Activated T-helper 2 cell treated with anti-CD3 and anti-CD28 coated beads, Interferon-gamma antibody, Interleukin-2, Interleukin-4, amounts not matched to agents 10 μg/mL and 5 μg/mL and 100 μg/mL, durations not matched to agents 14 hours and 24 hours and 36 hours (primary cell): ENCODE measurements at regions of chr17 and their contacts with region 1.

Region 1: GRCh38 chr17:49361902-49362722 is at the start of gene ZNF652:
- DNase-seq: peak; percentile 93
- H3K4me3 Mint-ChIP-seq: peak within 1 kb of the TSS; percentile 83
- H3K27ac Mint-ChIP-seq: peak within 1 kb of the TSS; percentile 85
- H3K4me1 Mint-ChIP-seq: peaks cover 47% of the 10 kb centered on the region
- H3K27me3 Mint-ChIP-seq: peaks cover 9% of the 10 kb centered on the region
- total RNA-seq, gene ZNF652: 4.3 and 5.4 TPM in 2 replicates

Region 2: DNA sequence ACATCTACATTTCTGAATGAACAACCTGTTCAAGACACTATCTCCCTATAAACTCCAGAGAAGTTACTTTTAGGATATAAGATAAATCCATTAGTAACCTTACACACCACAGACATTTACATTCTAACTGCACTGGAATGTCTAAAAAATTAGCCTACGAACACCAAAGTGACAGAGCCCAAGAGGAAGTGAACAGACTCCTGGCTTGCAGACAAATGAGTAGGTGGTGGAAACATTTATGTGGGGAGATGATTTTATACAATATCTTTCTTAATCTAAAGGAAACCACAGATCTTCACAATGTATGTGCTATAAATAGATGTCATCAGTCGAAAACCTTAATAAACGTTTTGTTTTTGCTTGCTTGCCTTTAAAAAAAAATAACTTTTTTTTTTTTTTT is 18.8 kb before region 1 on chr17:
- intact Hi-C with region 1: loop called (anchors 1 kb)
- DNase-seq: no peak
- H3K4me3 Mint-ChIP-seq: peak overlapping the region; percentile 59
- H3K27ac Mint-ChIP-seq: peak overlapping the region; percentile 74
- H3K4me1 Mint-ChIP-seq: peaks cover 43% of the 10 kb centered on the region
- H3K27me3 Mint-ChIP-seq: peaks cover 30% of the 10 kb centered on the region

Region 3: DNA sequence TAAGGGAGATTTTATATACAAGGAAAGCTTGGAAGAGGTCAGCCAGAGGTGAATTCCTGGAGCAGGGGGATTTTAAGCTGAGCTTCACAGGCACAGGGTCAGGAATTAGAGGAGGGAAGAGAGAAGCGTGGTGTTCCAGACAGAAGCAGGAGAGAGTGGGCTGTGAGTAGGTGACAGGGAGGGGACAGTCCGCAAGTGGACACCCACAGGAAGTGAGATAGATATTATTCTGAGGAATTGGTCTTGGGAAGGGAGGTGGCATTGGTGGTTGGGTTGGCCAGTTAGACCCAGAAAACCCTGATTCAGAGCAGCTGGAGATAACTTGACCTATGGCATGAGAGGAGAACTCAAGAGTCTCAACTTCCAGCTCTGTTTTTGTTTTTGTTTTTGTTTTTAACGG is 37.9 kb after region 1 on chr17:
- intact Hi-C with region 1: loop called (anchors 5 kb)
- DNase-seq: no peak
- H3K4me3 Mint-ChIP-seq: no peak overlapping the region
- H3K27ac Mint-ChIP-seq: no peak overlapping the region
- H3K4me1 Mint-ChIP-seq: peaks cover 8% of the 10 kb centered on the region
- H3K27me3 Mint-ChIP-seq: peaks cover 10% of the 10 kb centered on the region

Region 4: DNA sequence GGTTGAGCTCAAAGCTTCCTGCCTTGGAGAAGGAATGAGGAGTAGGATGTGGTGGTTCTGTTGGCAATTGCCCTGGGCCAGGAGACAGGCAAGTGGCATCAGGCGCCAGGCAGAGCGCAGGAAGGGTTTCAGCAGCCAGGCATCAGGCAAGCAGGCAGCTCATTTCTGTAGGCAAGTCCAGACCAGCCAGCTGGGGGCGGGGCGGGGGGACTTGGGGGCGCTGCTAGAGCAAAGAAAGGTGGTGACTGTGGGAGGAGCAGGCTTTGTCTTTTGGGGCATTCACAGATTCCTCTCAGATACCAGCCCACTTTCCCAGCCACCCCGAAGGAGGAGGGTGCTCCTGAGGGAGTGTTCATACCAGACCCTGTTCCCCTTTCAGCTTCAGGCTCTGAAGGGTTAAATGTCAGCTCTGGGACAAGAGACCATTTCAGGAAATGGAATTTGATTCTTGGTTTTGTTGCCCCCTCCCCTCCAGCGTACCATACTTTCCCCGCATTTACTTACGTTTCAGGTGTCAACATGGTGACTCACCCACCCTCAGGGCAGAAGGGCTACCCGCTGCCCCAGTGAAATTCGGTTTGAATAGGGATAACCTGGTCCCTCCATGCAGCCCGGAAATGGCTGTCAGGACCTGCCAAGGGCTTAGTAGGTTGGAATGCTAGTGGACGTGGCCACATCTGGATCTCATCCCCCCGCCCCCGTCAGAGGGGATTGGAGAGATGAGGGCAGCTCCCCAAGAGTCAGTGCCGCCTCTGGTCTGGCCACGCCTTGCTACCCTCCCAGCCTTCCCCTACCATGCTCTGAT is 146.2 kb after region 1 on chr17:
- intact Hi-C with region 1: no loop called
- DNase-seq: no peak
- H3K4me3 Mint-ChIP-seq: no peak overlapping the region
- H3K27ac Mint-ChIP-seq: no peak overlapping the region
- H3K4me1 Mint-ChIP-seq: no peaks in the 10 kb centered on the region
- H3K27me3 Mint-ChIP-seq: peaks cover 14% of the 10 kb centered on the region